CD8-positive, alpha-beta T cell (primary cell): ENCODE measurements at regions of chr10 and their contacts with region 1.

Region 1: DNA sequence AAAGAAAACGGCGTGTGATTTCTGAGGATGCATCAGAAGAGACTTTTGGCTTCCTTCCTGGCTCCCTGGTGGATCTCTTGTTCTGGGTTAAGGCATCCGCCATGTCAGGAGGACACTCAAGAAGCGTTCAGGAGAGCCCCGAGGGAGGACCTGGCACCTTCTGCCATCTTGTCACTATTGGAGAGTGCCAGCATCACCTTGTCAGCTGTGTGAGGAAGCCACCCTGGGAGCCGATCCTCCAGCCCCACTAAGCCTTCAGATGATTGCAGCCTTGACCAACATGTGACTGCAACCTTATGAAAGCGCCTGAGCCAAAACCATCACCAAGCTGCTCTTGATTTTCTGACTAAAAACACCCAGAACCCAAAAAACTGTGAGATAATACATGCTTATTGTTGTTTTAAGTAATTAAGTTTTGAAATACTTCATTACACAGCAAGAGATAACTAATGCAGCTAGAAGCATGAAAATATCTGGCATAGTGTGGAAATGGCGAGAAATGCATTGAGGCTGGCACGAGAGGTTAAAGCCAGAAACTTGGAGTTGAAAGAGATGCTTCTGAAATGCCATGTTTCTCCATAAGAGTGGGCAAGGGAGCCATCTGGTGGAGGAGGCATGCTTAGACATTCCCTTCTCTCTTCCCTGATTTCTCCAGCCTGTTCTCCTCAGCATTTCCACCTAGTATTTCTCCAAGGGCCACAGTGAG is 5.4 kb upstream of the ZFYVE27 start:
- DNase-seq: peak; percentile 22 to 81 (median 64)
- ATAC-seq: peak; percentile 83
- H3K4me3 ChIP-seq: no peak overlapping the region
- H3K4me3 Mint-ChIP-seq: no peak overlapping the region
- H3K27ac ChIP-seq: no peak overlapping the region
- H3K27ac Mint-ChIP-seq: no peak overlapping the region
- H3K4me1 ChIP-seq: peaks cover 2% of the 10 kb centered on the region
- H3K4me1 Mint-ChIP-seq: peaks cover 11% of the 10 kb centered on the region
- H3K27me3 ChIP-seq: no peaks in the 10 kb centered on the region
- H3K27me3 Mint-ChIP-seq: peaks cover 10% of the 10 kb centered on the region
- CTCF ChIP-seq: peak; percentile 73

Region 2: GRCh38 chr10:97069576-97070362 is 661.7 kb before region 1 on chr10:
- CTCF ChIA-PET with region 1: no interaction called
- POLR2A ChIA-PET with region 1: no interaction called
- intact Hi-C with region 1: no loop called
- DNase-seq: peak in 2 of 9 experiments; percentile 51 to 56
- ATAC-seq: peak; percentile 58
- H3K4me3 ChIP-seq: no peak overlapping the region
- H3K4me3 Mint-ChIP-seq: no peak overlapping the region
- H3K27ac ChIP-seq: no peak overlapping the region
- H3K27ac Mint-ChIP-seq: no peak overlapping the region
- H3K4me1 ChIP-seq: no peaks in the 10 kb centered on the region
- H3K4me1 Mint-ChIP-seq: peaks cover 5% of the 10 kb centered on the region
- H3K27me3 ChIP-seq: no peaks in the 10 kb centered on the region
- H3K27me3 Mint-ChIP-seq: peaks cover 32% of the 10 kb centered on the region
- CTCF ChIP-seq: no peak

Region 3: DNA sequence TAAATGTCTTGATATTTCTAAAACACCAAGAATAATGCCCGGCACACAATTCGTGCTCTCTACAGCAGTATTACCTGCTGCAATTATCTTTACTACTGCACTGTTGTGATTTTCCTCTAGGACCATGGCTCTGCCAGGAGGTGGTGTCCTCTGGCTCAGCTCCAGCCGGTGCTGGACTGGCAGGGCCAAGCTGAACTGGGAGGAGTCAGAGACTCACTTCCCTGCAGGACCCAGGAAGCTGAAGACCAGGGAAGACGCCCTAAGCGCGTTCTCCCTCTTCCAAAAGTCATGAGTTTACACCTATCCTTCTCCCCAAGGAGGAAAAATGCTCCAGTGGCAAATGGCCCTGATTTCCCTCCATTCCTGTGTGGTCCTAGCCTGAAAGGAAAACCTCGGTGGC is 561.2 kb before region 1 on chr10:
- CTCF ChIA-PET with region 1: no interaction called
- POLR2A ChIA-PET with region 1: no interaction called
- intact Hi-C with region 1: no loop called
- DNase-seq: no peak
- ATAC-seq: no peak
- H3K4me3 ChIP-seq: no peak overlapping the region
- H3K4me3 Mint-ChIP-seq: no peak overlapping the region
- H3K27ac ChIP-seq: no peak overlapping the region
- H3K27ac Mint-ChIP-seq: no peak overlapping the region
- H3K4me1 ChIP-seq: no peaks in the 10 kb centered on the region
- H3K4me1 Mint-ChIP-seq: no peaks in the 10 kb centered on the region
- H3K27me3 ChIP-seq: no peaks in the 10 kb centered on the region
- H3K27me3 Mint-ChIP-seq: peaks cover 11% of the 10 kb centered on the region
- CTCF ChIP-seq: no peak

Region 4: DNA sequence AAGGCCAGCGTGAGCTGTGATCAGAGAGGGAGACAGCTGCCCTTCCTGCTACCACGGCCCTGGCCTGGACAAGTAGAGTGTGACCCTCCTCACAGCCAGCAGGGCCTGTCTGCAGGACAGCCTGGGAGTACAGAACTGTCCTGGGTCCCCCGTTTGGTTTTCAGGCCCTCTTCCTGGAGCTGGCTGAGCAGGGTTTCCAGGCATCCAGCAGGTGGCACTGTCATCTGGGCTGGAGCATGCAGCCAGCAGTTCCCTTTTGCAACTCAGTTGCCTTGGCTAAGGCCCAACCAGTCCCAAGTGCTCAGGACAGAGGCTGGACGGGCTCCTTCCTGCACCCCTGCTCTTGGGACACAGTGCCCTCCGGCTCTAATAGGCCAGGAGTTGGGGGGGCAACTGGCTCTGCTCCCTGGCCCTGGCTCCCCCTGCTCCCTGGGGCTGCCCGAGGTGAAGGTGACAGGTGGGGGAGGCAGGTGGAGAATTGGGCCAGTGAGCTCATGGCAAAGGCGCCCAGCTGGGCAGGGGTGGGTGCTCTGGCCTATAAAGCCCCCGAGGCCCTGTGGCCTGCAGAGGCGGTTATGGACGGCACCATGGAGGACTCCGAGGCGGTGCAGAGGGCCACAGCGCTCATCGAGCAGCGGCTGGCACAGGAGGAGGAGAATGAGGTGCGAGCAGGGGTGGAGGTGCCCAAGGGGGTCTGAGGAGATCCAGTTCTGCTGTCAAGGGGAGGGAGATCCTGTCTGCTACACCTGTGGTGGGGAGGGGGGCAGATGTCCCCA is 159.1 kb before region 1 on chr10 and contains the start of gene ANKRD2:
- CTCF ChIA-PET with region 1: interaction called, 6 read pairs
- POLR2A ChIA-PET with region 1: no interaction called
- intact Hi-C with region 1: loop called in 1 of 2 experiments (anchors 1 kb)
- DNase-seq: peak; percentile 19 to 66 (median 51)
- ATAC-seq: peak; percentile 64
- H3K4me3 ChIP-seq: no peak within 1 kb of the TSS
- H3K4me3 Mint-ChIP-seq: no peak within 1 kb of the TSS
- H3K27ac ChIP-seq: no peak within 1 kb of the TSS
- H3K27ac Mint-ChIP-seq: no peak within 1 kb of the TSS
- H3K4me1 ChIP-seq: no peaks in the 10 kb centered on the region
- H3K4me1 Mint-ChIP-seq: no peaks in the 10 kb centered on the region
- H3K27me3 ChIP-seq: no peaks in the 10 kb centered on the region
- H3K27me3 Mint-ChIP-seq: no peaks in the 10 kb centered on the region
- CTCF ChIP-seq: peak; percentile 62
- total RNA-seq, gene ANKRD2: not detected

Region 5: GRCh38 chr10:97676770-97677581 is 54.5 kb before region 1 on chr10:
- CTCF ChIA-PET with region 1: interaction called, 172 read pairs
- POLR2A ChIA-PET with region 1: no interaction called
- intact Hi-C with region 1: loop called (anchors 1 kb)
- DNase-seq: peak in 8 of 9 experiments; percentile 27 to 79 (median 56)
- ATAC-seq: peak; percentile 97
- H3K4me3 ChIP-seq: no peak overlapping the region
- H3K4me3 Mint-ChIP-seq: no peak overlapping the region
- H3K27ac ChIP-seq: no peak overlapping the region
- H3K27ac Mint-ChIP-seq: no peak overlapping the region
- H3K4me1 ChIP-seq: no peaks in the 10 kb centered on the region
- H3K4me1 Mint-ChIP-seq: no peaks in the 10 kb centered on the region
- H3K27me3 ChIP-seq: no peaks in the 10 kb centered on the region
- H3K27me3 Mint-ChIP-seq: no peaks in the 10 kb centered on the region
- CTCF ChIP-seq: peak; percentile 91

Region 6: DNA sequence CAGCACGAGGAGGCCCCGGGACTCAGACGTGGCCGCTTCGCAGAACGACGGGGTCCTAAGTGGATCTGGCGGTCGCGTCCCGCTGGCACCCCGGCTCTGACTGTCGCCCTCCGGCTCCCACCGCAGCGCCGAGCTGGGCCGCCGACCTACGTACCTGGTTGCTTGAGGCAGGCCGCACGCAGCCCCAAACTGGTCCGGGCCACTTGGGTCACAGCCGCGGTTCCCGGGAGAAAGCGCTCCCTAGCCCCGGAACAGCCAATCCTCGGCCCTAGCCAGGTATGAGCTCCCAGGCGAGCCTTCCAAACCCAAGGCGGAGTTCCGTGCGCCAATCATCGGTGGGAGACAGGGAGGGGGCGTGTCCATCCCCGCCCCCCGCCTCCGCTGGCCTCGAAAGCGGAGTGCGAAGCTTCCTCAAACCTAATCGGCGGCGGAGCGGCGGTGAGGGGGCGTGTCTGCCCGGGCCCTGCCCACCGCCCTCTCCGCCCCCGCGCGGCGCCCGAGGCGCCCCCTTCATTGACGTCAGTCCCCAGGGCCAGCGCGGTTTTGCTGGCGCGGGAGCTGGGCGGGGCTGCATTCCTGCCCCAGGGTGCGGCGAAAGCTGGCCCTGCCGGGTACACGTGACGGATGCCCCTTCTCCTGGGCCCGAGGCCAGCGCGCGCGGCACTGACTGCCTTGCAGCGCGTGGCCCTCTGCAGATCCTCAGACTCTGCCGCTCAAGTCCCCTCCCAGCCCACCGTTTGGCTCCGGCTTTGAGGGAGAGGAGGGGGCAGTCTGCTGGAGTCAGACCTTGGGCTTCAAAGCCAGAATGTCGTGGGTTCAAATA is 44.3 kb before region 1 on chr10 and contains the start of gene AVPI1:
- CTCF ChIA-PET with region 1: interaction called, 172 read pairs
- POLR2A ChIA-PET with region 1: interaction called, 32 read pairs
- intact Hi-C with region 1: no loop called
- DNase-seq: peak; percentile 90 to 98 (median 96)
- ATAC-seq: peak; percentile 94
- H3K4me3 ChIP-seq: peak within 1 kb of the TSS; percentile 77 to 82
- H3K4me3 Mint-ChIP-seq: peak within 1 kb of the TSS; percentile 89
- H3K27ac ChIP-seq: peak within 1 kb of the TSS; percentile 47 to 64
- H3K27ac Mint-ChIP-seq: peak within 1 kb of the TSS; percentile 86
- H3K4me1 ChIP-seq: peaks cover 22% of the 10 kb centered on the region
- H3K4me1 Mint-ChIP-seq: peaks cover 23% of the 10 kb centered on the region
- H3K27me3 ChIP-seq: no peaks in the 10 kb centered on the region
- H3K27me3 Mint-ChIP-seq: peaks cover 4% of the 10 kb centered on the region
- CTCF ChIP-seq: no peak
- total RNA-seq, gene AVPI1: 13.7 TPM

Region 7: GRCh38 chr10:97701438-97702069 is 29.9 kb before region 1 on chr10:
- CTCF ChIA-PET with region 1: interaction called, 224 read pairs
- POLR2A ChIA-PET with region 1: interaction called, 6 read pairs
- intact Hi-C with region 1: loop called (anchors 2 kb)
- DNase-seq: peak in 6 of 9 experiments; percentile 37 to 77 (median 56)
- ATAC-seq: peak; percentile 99
- H3K4me3 ChIP-seq: no peak overlapping the region
- H3K4me3 Mint-ChIP-seq: no peak overlapping the region
- H3K27ac ChIP-seq: no peak overlapping the region
- H3K27ac Mint-ChIP-seq: no peak overlapping the region
- H3K4me1 ChIP-seq: no peaks in the 10 kb centered on the region
- H3K4me1 Mint-ChIP-seq: no peaks in the 10 kb centered on the region
- H3K27me3 ChIP-seq: no peaks in the 10 kb centered on the region
- H3K27me3 Mint-ChIP-seq: peaks cover 11% of the 10 kb centered on the region
- CTCF ChIP-seq: peak; percentile 69

Region 8: DNA sequence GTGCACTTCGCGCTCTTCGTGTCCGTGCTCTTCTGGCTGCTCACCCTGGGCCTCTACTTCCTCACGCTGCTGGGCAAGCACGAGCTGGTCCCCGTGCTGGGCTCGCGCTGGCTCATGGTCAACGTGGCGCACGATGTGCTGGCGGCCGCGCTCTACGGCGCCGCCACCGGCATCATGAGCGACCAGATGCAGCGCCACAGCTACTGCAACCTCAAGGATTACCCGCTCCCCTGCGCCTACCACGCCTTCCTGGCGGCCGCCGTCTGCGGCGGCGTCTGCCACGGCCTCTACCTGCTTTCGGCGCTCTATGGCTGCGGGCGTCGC is 17.5 kb before region 1 on chr10:
- CTCF ChIA-PET with region 1: interaction called, 224 read pairs
- POLR2A ChIA-PET with region 1: interaction called, 7 read pairs
- intact Hi-C with region 1: loop called (anchors 1 kb)
- DNase-seq: peak in 8 of 9 experiments; percentile 19 to 82 (median 59)
- ATAC-seq: peak; percentile 83
- H3K4me3 ChIP-seq: peak overlapping the region; percentile 57 to 63
- H3K4me3 Mint-ChIP-seq: peak overlapping the region; percentile 99
- H3K27ac ChIP-seq: no peak overlapping the region
- H3K27ac Mint-ChIP-seq: peak overlapping the region; percentile 82
- H3K4me1 ChIP-seq: peaks cover 9% of the 10 kb centered on the region
- H3K4me1 Mint-ChIP-seq: peaks cover 15% of the 10 kb centered on the region
- H3K27me3 ChIP-seq: peaks cover 0 to 3% of the 10 kb centered on the region in 2 experiments
- H3K27me3 Mint-ChIP-seq: peaks cover 17% of the 10 kb centered on the region
- CTCF ChIP-seq: no peak

Region 9: DNA sequence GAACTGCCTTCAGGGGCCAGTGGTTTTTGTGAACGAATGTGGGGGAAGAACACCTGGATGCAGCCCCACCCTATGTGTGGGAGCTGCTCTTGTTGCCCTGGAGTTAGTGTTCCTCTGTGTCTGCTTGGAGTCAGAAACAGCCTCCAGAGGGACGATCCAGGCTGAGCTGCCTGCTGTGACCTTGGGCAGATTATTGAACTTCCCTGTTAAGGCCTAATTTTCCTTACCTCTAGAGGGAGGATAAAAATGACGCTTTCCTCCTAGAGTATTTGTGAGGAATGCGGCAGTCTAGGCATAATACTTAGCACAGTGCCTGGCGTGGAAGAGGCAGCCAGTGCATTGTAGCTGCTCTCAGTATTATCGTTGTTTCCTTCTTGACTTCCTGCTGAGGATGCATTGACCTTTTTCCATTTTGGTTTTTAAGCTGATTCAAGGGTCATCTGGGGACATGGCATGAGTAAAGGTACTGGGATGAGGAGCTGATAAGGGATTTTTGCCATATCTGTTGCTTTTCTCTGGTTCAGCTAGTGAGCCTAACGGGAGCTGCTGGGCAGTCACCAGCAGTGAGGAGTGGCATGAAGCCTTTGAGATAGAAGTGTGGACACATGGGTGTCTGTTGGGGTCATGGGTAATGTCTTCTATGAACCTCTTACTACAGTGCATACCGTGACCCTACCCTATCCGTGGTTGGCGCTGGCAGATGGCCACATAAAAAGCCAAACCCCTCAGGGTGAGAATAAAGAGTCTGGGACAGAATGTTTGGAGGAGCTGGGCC is 11.9 kb after region 1 on chr10:
- CTCF ChIA-PET with region 1: interaction called, 12 read pairs
- POLR2A ChIA-PET with region 1: interaction called, 9 read pairs
- intact Hi-C with region 1: no loop called
- DNase-seq: no peak
- ATAC-seq: no peak
- H3K4me3 ChIP-seq: no peak overlapping the region
- H3K4me3 Mint-ChIP-seq: no peak overlapping the region
- H3K27ac ChIP-seq: no peak overlapping the region
- H3K27ac Mint-ChIP-seq: no peak overlapping the region
- H3K4me1 ChIP-seq: peaks cover 22% of the 10 kb centered on the region
- H3K4me1 Mint-ChIP-seq: peaks cover 54% of the 10 kb centered on the region
- H3K27me3 ChIP-seq: no peaks in the 10 kb centered on the region
- H3K27me3 Mint-ChIP-seq: no peaks in the 10 kb centered on the region
- CTCF ChIP-seq: no peak